HepG2 (cell line): ENCODE measurements at regions of chr1 and their contacts with region 1.

Region 1: DNA sequence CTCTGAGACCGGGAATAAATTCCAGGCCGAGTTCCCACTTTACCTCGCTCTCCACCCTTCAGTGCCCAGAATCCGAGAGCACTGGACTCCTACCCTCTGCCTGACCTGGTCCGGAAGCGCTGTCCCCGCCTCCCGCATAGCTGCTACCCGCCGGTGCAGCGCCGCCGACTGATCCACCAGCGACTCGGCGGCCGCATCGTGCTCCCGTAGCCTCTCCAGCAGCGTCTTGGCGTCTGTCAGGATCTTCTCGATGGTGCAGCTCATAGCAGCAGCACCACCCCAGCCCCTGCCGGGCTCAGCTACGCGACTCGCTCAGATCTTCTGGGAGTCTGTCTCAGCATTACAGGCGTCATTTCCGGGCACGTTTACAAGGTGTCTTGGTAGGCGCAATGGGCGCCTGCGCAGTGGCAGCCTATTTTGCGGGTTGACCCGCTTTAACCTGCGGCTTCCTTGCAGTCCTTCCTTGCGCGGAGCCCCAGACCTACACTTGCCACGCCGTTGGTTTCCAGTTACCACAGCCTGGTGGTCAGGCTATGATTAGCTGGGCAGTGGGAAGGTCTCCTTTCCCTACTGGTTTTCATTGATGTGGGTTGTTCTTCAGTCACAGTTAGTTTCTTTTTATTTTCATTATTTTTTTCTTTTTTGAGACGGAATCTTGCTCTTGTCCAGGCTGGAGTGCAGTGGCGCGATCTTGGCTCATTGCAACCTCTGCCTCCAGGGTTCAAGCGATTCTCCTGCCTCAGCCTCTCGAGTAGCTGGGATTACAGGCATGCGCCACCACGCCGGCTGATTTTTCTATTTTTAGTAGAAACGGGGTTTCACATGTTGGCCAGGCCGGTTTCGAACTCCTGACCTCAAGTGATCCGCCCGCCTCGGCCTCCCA is at the start of gene SIKE1:
- DNase-seq: peak; percentile 85
- ATAC-seq: peak; percentile 98
- H3K4me3 ChIP-seq: peak within 1 kb of the TSS; percentile 84 to 87 (median 84)
- H3K27ac ChIP-seq: peak within 1 kb of the TSS; percentile 87
- H3K4me1 ChIP-seq: peaks cover 16% of the 10 kb centered on the region
- H3K27me3 ChIP-seq: no peaks in the 10 kb centered on the region; a peak in 1 of 5 replicates
- CTCF ChIP-seq: peak; percentile 55
- EP300 ChIP-seq: no peak
- POLR2A ChIP-seq: peak; percentile 91 to 94
- RAD21 ChIP-seq: no peak
- total RNA-seq, gene SIKE1: 58.4 and 97.5 TPM in 2 replicates

Region 2: GRCh38 chr1:114716304-114717170 is 64.0 kb before region 1 on chr1 and contains the start of gene NRAS:
- CTCF ChIA-PET with region 1: no interaction called
- POLR2A ChIA-PET with region 1: interaction called, 11 read pairs
- in situ Hi-C with region 1: no loop called
- intact Hi-C with region 1: no loop called
- DNase-seq: peak; percentile 81
- ATAC-seq: peak; percentile 93
- H3K4me3 ChIP-seq: peak within 1 kb of the TSS; percentile 86 to 100 (median 94)
- H3K27ac ChIP-seq: peak within 1 kb of the TSS; percentile 85
- H3K4me1 ChIP-seq: peaks cover 29% of the 10 kb centered on the region
- H3K27me3 ChIP-seq: no peaks in the 10 kb centered on the region; a peak in 1 of 5 replicates
- CTCF ChIP-seq: no peak
- EP300 ChIP-seq: peak in 1 of 2 experiments; percentile 54; a peak in 1 of 4 replicates
- POLR2A ChIP-seq: peak; percentile 69 to 71
- RAD21 ChIP-seq: peak; percentile 21; the same call in 1 of the 2 replicates
- total RNA-seq, gene NRAS: 58.8 and 96.2 TPM in 2 replicates

Region 3: GRCh38 chr1:114745291-114745690 is 35.3 kb before region 1 on chr1:
- CTCF ChIA-PET with region 1: no interaction called
- POLR2A ChIA-PET with region 1: no interaction called
- in situ Hi-C with region 1: no loop called
- intact Hi-C with region 1: no loop called
- DNase-seq: no peak
- ATAC-seq: no peak
- H3K4me3 ChIP-seq: no peak overlapping the region
- H3K27ac ChIP-seq: no peak overlapping the region
- H3K4me1 ChIP-seq: no peaks in the 10 kb centered on the region
- H3K27me3 ChIP-seq: no peaks in the 10 kb centered on the region
- CTCF ChIP-seq: no peak
- EP300 ChIP-seq: no peak
- POLR2A ChIP-seq: no peak
- RAD21 ChIP-seq: no peak

Region 4: GRCh38 chr1:114757455-114758250 is 22.9 kb before region 1 on chr1 and contains the start of gene CSDE1:
- CTCF ChIA-PET with region 1: no interaction called
- POLR2A ChIA-PET with region 1: interaction called, 16 read pairs
- in situ Hi-C with region 1: no loop called
- intact Hi-C with region 1: no loop called
- DNase-seq: peak; percentile 98
- ATAC-seq: peak; percentile 95
- H3K4me3 ChIP-seq: peak within 1 kb of the TSS; percentile 85 to 100 (median 99)
- H3K27ac ChIP-seq: peak within 1 kb of the TSS; percentile 98
- H3K4me1 ChIP-seq: peaks cover 44% of the 10 kb centered on the region
- H3K27me3 ChIP-seq: no peaks in the 10 kb centered on the region; a peak in 1 of 5 replicates
- CTCF ChIP-seq: peak; percentile 66
- EP300 ChIP-seq: peak in 1 of 2 experiments; percentile 17; a peak in 1 of 4 replicates
- POLR2A ChIP-seq: peak; percentile 85 to 97
- RAD21 ChIP-seq: peak; percentile 6; the same call in 1 of the 2 replicates
- total RNA-seq, gene CSDE1: 313 and 582 TPM in 2 replicates

Region 5: GRCh38 chr1:115041654-115042053 is 261.1 kb after region 1 on chr1:
- CTCF ChIA-PET with region 1: no interaction called
- POLR2A ChIA-PET with region 1: no interaction called
- in situ Hi-C with region 1: no loop called
- intact Hi-C with region 1: loop called (anchors 10 kb)
- DNase-seq: peak; percentile 59
- ATAC-seq: peak; percentile 81
- H3K4me3 ChIP-seq: no peak overlapping the region
- H3K27ac ChIP-seq: no peak overlapping the region
- H3K4me1 ChIP-seq: peaks cover 20% of the 10 kb centered on the region
- H3K27me3 ChIP-seq: no peaks in the 10 kb centered on the region
- CTCF ChIP-seq: peak; percentile 76
- EP300 ChIP-seq: no peak
- POLR2A ChIP-seq: no peak
- RAD21 ChIP-seq: peak; percentile 53

Region 6: DNA sequence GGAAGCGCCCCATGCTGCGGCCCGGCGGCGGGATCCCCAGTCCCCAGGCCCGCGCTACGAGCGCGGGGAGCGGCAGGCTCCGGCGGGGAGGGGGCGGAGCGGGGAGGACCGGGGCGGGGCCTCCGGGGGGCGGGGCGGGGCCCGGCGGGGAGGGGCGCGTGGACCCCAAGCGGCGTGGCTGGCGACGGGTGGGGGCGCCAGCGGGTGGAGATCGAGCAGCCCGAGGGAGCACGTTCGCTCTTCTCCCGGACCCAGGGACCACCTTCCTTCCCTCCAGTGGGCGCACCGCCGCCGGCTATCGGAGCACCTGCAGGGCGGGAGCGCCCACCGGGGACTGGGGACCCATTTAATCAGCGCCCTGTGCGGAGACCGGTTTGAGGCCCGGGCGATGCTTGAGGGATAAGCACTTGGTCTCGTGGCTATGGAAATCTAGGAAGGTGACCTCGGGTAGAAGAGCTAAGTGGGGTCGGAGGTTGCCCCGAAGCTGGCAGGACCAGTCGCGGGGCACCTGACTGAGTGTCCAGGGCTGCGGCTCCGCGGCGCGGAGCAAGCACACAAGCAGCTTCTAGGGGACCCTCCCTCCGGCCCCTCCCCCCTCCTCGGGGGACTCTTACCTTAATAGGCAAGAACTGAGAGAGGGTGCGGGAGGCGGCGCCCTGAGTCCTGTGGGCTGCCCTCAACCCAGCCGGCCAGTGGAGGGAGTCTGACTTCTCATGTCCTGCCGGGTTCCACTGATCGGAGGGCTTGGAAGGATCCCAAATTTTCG is 309.0 kb after region 1 on chr1 and contains the start of gene TSPAN2:
- CTCF ChIA-PET with region 1: no interaction called
- POLR2A ChIA-PET with region 1: no interaction called
- in situ Hi-C with region 1: no loop called
- intact Hi-C with region 1: no loop called
- DNase-seq: no peak
- ATAC-seq: peak; percentile 86
- H3K4me3 ChIP-seq: peak within 1 kb of the TSS in 2 of 3 experiments; percentile 20 to 62; a peak in 3 of 6 replicates
- H3K27ac ChIP-seq: no peak within 1 kb of the TSS
- H3K4me1 ChIP-seq: no peaks in the 10 kb centered on the region
- H3K27me3 ChIP-seq: peaks cover 2 to 22% of the 10 kb centered on the region in 2 experiments
- CTCF ChIP-seq: no peak
- EP300 ChIP-seq: no peak
- POLR2A ChIP-seq: no peak
- RAD21 ChIP-seq: no peak
- total RNA-seq, gene TSPAN2: not detected in 2 replicates